ENCODE measurements at regions of chr15 and their contacts with region 1.

Region 1: DNA sequence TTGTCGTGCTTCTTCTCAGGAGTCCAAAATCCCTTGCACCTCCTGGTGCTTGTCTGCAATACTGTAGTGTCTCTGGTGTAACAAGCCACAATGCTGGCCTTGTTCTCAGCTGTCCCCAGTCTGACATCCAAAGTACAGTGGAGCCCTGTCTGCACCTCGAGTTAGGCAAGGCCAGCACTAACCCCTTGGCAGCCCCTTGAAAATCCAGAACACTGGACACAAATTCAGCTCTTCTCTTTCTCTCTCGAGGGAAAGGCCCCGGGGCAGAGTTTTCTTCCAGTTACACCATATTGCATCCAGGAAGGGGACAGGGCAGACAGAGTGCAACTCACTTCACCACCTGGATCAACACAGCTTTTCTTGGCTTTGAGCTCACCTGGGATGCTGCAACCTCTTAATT is 91.3 kb upstream of the ATP10A start:
- DNase-seq: no peak
- H3K4me3 ChIP-seq: no peak overlapping the region
- H3K27ac ChIP-seq: no peak overlapping the region
- H3K4me1 ChIP-seq: no peaks in the 10 kb centered on the region
- H3K27me3 ChIP-seq: no peaks in the 10 kb centered on the region
- CTCF ChIP-seq: no peak

Region 2: DNA sequence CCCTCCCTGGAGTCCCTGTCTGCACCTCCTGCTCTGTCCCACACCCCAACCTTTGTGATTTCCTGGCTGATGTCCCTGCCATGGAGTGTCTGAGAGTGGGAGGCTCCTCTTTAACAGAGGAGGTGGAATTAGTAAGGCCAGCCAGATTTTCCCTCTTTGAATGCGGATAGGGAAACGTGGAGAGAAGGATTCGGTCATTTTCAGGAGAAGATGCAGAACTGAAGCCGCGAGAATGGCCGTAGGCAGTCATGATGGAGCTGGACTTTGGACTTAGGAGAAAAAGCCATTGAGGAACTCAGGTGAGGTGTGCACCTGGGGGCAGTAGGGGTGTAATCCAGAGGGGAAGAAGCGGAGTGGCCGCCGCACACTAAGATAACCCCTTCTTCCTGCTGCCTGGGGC is 46.8 kb after region 1 on chr15:
- intact Hi-C with region 1: loop called (anchors 10 kb)
- DNase-seq: no peak
- H3K4me3 ChIP-seq: no peak overlapping the region
- H3K27ac ChIP-seq: no peak overlapping the region
- H3K4me1 ChIP-seq: no peaks in the 10 kb centered on the region
- H3K27me3 ChIP-seq: no peaks in the 10 kb centered on the region
- CTCF ChIP-seq: no peak

Region 3: GRCh38 chr15:26051761-26052675 is 97.6 kb after region 1 on chr15:
- intact Hi-C with region 1: no loop called
- DNase-seq: peak; percentile 22
- H3K4me3 ChIP-seq: no peak overlapping the region
- H3K27ac ChIP-seq: no peak overlapping the region
- H3K4me1 ChIP-seq: no peaks in the 10 kb centered on the region
- H3K27me3 ChIP-seq: no peaks in the 10 kb centered on the region
- CTCF ChIP-seq: no peak

Measured in colonic mucosa (tissue), 4 donors.